ENCODE measurements at regions of chr22 and their contacts with region 1.

Region 1: GRCh38 chr22:22884010-22884887 is 3.4 kb upstream of the IGLL5 start:
- DNase-seq: peak; percentile 65 to 69
- ATAC-seq: peak; percentile 84 to 97
- H3K4me3 ChIP-seq: no peak overlapping the region
- H3K27ac ChIP-seq: no peak overlapping the region
- H3K4me1 ChIP-seq: no peaks in the 10 kb centered on the region
- CTCF ChIP-seq: peak; percentile 60
- EP300 ChIP-seq: no peak
- POLR2A ChIP-seq: no peak
- RAD21 ChIP-seq: peak; percentile 75 to 81

Region 2: GRCh38 chr22:22748297-22748743 is 135.9 kb before region 1 on chr22:
- CTCF ChIA-PET with region 1: interaction called, 14 read pairs
- POLR2A ChIA-PET with region 1: no interaction called
- DNase-seq: peak in 1 of 2 experiments; percentile 51
- ATAC-seq: peak; percentile 83 to 93
- H3K4me3 ChIP-seq: no peak overlapping the region
- H3K27ac ChIP-seq: no peak overlapping the region
- H3K4me1 ChIP-seq: no peaks in the 10 kb centered on the region
- CTCF ChIP-seq: peak; percentile 63
- EP300 ChIP-seq: no peak
- POLR2A ChIP-seq: no peak
- RAD21 ChIP-seq: peak; percentile 52 to 61

Region 3: DNA sequence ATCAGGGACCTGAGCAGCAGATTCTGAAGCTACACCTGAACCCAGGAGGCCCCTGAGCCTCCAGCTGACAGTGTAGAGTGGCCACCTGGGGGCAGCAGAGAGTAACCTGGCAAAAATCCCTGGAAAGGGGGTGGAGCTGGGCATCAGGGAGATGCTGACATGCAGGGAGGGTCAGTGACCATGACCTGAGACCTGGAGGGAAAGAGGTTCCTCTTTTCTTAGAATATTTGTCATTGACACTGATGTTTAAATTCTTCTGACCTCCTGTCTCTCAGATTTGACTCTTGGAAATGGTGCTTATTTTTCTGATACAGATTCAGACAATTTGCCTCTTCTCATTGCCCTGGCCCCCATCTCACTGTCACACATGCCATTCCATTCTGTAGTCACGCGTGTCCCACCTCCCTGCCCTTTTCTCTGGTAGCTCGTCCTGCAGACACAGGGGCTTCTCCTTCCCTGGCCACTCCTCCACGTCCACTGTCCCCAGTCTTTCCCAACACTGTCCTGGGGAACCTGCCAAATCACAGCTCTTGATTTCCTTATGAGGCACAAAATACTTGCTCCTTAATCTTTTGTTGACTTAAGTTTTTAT is 113.9 kb before region 1 on chr22:
- CTCF ChIA-PET with region 1: interaction called, 15 read pairs
- POLR2A ChIA-PET with region 1: no interaction called
- DNase-seq: peak; percentile 30 to 33
- ATAC-seq: peak; percentile 83 to 91
- H3K4me3 ChIP-seq: no peak overlapping the region
- H3K27ac ChIP-seq: no peak overlapping the region
- H3K4me1 ChIP-seq: no peaks in the 10 kb centered on the region
- CTCF ChIP-seq: peak; percentile 57
- EP300 ChIP-seq: no peak
- POLR2A ChIP-seq: no peak
- RAD21 ChIP-seq: peak in 1 of 2 experiments; percentile 23; a peak in 2 of 5 replicates

Region 4: GRCh38 chr22:22848364-22848866 is 35.8 kb before region 1 on chr22:
- CTCF ChIA-PET with region 1: interaction called, 22 read pairs
- POLR2A ChIA-PET with region 1: no interaction called
- DNase-seq: peak; percentile 18 to 38
- ATAC-seq: peak; percentile 87 to 98
- H3K4me3 ChIP-seq: no peak overlapping the region
- H3K27ac ChIP-seq: no peak overlapping the region
- H3K4me1 ChIP-seq: no peaks in the 10 kb centered on the region
- CTCF ChIP-seq: peak; percentile 72
- EP300 ChIP-seq: no peak
- POLR2A ChIP-seq: no peak
- RAD21 ChIP-seq: peak; percentile 56 to 63

Measured in A549 (cell line).